ENCODE measurements at regions of chr19 and their contacts with region 1.

Region 1: DNA sequence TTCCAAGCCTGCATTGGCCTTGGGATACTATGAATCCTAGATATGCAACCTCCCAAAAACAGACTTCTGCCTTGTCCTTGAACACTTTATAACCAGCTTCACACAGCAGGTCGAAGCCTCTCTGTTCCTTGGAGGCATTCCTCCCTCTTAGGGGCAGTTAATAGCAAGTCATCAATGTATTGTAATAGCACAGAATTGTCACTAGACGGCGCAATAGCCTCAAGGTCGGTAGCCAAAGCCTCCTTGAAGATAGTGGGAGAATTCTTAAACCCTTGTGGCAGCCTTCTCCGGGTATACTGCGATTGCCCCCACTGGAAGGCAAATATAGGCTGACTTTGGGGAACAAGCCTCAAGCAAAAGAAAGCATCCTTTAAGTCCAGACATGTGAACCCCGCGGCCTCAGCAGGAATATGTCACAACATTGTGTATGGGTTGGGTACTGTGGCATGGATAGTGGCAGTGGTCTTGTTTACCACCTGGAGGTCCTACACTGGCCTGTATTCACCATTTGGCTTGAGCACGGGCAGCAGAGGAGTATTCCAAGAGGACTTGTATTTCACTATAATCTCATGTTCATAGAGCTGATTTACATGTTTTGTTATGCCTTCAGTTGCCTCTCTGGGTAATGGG is 61.1 kb downstream of the ZNF431 start:
- DNase-seq: no peak
- ATAC-seq: peak in 2 of 4 donors; percentile 34 to 44
- H3K4me3 ChIP-seq: no peak overlapping the region
- H3K27ac ChIP-seq: no peak overlapping the region
- H3K4me1 ChIP-seq: no peaks in the 10 kb centered on the region
- H3K27me3 ChIP-seq: no peaks in the 10 kb centered on the region
- CTCF ChIP-seq: peak; percentile 42

Region 2: DNA sequence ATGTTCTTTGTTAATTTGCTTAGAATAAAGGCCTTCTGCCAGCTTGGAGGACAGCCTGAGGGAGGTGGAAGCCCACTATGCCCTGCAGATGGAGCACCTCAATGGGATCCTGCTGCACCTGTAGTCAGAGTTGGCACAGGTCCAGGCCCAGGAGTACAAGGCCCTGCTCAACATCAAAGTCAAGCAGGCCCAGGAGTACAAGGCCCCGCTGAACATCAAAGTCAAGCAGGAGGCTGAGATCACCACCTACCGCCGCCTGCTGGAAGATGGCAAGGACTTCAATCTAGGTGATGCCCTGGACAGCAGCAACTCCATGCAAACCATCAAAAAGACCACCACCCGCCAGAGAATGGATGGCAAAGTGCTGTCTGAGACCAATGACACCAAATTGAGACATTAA is 238.2 kb before region 1 on chr19:
- intact Hi-C with region 1: no loop called
- DNase-seq: no peak
- ATAC-seq: no peak
- H3K4me3 ChIP-seq: no peak overlapping the region
- H3K27ac ChIP-seq: no peak overlapping the region
- H3K4me1 ChIP-seq: no peaks in the 10 kb centered on the region
- H3K27me3 ChIP-seq: no peaks in the 10 kb centered on the region
- CTCF ChIP-seq: no peak

Region 3: GRCh38 chr19:21092109-21092508 is 110.9 kb before region 1 on chr19:
- intact Hi-C with region 1: no loop called
- DNase-seq: no peak
- ATAC-seq: no peak
- H3K4me3 ChIP-seq: no peak overlapping the region
- H3K27ac ChIP-seq: no peak overlapping the region
- H3K4me1 ChIP-seq: no peaks in the 10 kb centered on the region
- H3K27me3 ChIP-seq: no peaks in the 10 kb centered on the region
- CTCF ChIP-seq: no peak

Region 4: GRCh38 chr19:21233691-21234090 is 30.7 kb after region 1 on chr19:
- intact Hi-C with region 1: no loop called
- DNase-seq: no peak
- ATAC-seq: no peak
- H3K4me3 ChIP-seq: no peak overlapping the region
- H3K27ac ChIP-seq: no peak overlapping the region
- H3K4me1 ChIP-seq: no peaks in the 10 kb centered on the region
- H3K27me3 ChIP-seq: no peaks in the 10 kb centered on the region
- CTCF ChIP-seq: no peak

Region 5: DNA sequence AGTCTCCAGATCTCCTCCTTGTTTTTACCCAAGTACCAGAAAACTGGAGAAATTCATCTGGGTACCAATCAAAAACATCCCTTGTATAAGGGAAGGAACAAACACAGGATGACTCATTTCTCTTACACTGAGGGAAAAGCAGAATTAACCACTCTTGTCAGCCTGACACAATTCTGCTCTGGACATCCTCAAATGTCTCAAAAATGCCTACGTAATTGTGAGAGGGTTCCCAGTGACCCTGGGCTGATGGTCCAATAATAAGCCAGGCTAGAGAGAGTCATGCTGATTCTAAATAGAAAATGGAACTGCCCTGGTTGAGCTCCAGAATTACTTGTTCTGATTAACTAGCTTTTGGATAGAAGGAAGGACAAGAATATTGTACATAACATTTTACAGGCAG is 111.7 kb after region 1 on chr19:
- intact Hi-C with region 1: no loop called
- DNase-seq: no peak
- ATAC-seq: no peak
- H3K4me3 ChIP-seq: no peak overlapping the region
- H3K27ac ChIP-seq: no peak overlapping the region
- H3K4me1 ChIP-seq: peaks cover 9% of the 10 kb centered on the region
- H3K27me3 ChIP-seq: no peaks in the 10 kb centered on the region
- CTCF ChIP-seq: no peak

Region 6: GRCh38 chr19:21482863-21483276 is 279.9 kb after region 1 on chr19:
- intact Hi-C with region 1: loop called in 1 of 2 experiments (anchors 10 kb)
- DNase-seq: peak; percentile 49 to 77
- ATAC-seq: peak in 3 of 4 donors; percentile 59 to 89 (median 87)
- H3K4me3 ChIP-seq: no peak overlapping the region
- H3K27ac ChIP-seq: no peak overlapping the region
- H3K4me1 ChIP-seq: no peaks in the 10 kb centered on the region
- H3K27me3 ChIP-seq: no peaks in the 10 kb centered on the region
- CTCF ChIP-seq: peak; percentile 63

Region 7: DNA sequence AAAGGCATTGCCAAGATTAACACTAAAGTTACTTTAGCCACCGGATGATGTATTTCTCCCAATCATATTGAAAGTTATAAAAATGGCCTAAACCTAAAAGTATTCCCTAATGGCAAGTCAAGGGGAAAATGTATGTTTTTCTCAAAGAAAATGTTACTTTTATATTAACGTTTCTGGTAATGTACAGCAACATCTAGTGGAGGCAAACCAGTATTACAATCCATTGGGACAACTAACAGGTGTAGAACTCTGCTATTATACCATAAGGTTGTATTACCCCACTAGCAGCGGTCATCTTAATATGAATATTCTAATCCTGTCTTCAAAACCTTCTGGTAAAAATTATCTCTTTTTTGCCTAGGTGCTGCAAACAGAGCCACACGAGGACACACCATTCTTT is 495.2 kb after region 1 on chr19:
- intact Hi-C with region 1: loop called in 1 of 2 experiments (anchors 5 kb)
- DNase-seq: no peak
- ATAC-seq: peak in 2 of 4 donors; percentile 55 to 75
- H3K4me3 ChIP-seq: no peak overlapping the region
- H3K27ac ChIP-seq: no peak overlapping the region
- H3K4me1 ChIP-seq: no peaks in the 10 kb centered on the region
- H3K27me3 ChIP-seq: no peaks in the 10 kb centered on the region
- CTCF ChIP-seq: peak; percentile 69